Panc1 (cell line): ENCODE measurements at regions of chr14 and their contacts with region 1.

Region 1: DNA sequence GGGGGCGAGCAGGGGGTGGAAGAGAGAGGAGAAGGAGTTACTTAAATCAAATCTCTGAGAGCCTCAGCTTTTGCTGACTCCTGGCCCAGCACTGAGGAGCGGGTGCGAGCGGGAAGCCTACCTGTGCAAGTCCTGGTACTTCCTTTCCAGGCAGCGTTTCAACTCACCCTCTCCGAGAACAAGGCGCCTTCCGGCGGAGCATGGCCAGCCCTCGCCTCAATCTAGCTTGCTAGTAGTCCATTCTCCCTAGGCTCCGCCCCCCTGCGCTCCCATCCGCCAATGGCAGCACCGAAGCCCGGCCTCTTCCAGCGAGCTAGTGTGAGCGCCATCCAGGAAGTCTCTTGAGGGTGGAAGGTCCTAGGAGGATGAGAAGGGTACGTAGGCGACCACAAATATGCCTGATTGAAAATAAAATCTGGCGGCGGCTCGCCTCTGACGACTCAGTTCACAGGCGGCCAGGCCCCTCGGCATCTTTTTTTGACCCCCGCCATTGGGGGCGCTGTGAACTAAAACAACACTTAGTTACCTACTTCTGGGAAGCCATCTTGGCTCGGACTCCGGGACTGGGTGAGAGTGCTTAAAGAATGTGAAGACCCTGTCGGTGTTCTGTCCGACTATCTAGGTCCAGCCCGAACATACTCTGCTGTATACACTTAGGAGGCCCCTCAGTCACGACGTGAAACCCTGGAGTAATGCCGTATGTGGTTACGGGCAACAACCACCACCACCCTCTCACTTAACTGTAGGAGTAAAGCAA is at the start of gene CHD8:
- DNase-seq: peak; percentile 96
- ATAC-seq: peak; percentile 99
- H3K4me3 ChIP-seq: peak within 1 kb of the TSS; percentile 77 to 96
- H3K27ac ChIP-seq: peak within 1 kb of the TSS; percentile 98
- H3K4me1 ChIP-seq: peaks cover 4% of the 10 kb centered on the region; the same call in 1 of the 2 replicates
- H3K27me3 ChIP-seq: no peaks in the 10 kb centered on the region
- CTCF ChIP-seq: peak; percentile 78
- total RNA-seq, gene CHD8: 64.7 TPM

Region 2: DNA sequence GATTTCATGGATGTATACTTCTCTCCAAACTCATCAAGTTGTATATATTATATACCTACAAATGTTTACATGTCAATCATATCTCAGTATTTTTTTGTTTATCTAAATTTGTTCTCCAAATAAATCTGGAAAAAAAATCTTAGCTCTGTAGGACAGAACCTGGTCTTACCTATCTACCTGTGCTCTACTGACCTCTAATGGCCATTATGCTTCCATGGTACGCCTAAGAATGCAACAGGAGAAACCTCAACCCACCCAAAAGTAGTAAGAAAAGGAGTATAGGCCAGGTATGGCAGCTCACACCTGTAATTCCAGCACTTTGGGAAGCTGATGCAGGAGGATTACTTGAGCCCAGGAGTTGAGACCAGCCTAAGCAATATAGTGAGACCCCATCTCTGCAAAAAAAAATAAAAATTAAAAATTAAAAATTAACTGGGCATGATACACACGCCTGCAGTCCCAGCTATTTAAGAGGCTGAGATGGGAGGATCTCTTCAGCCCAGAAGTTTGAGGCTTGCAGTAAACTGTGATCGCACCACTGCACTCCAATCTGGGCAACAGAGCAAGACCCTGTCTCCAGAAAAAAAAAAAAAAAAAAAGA is 1208.3 kb before region 1 on chr14:
- CTCF ChIA-PET with region 1: no interaction called
- POLR2A ChIA-PET with region 1: no interaction called
- in situ Hi-C with region 1: no loop called
- intact Hi-C with region 1: no loop called
- DNase-seq: no peak
- ATAC-seq: peak; percentile 78
- H3K4me3 ChIP-seq: no peak overlapping the region
- H3K27ac ChIP-seq: no peak overlapping the region
- H3K4me1 ChIP-seq: no peaks in the 10 kb centered on the region
- H3K27me3 ChIP-seq: no peaks in the 10 kb centered on the region
- CTCF ChIP-seq: peak; percentile 62

Region 3: GRCh38 chr14:21123429-21123828 is 332.7 kb before region 1 on chr14:
- CTCF ChIA-PET with region 1: interaction called, 12 read pairs
- POLR2A ChIA-PET with region 1: no interaction called
- in situ Hi-C with region 1: no loop called
- intact Hi-C with region 1: no loop called
- DNase-seq: no peak
- ATAC-seq: no peak
- H3K4me3 ChIP-seq: no peak overlapping the region
- H3K27ac ChIP-seq: no peak overlapping the region
- H3K4me1 ChIP-seq: no peaks in the 10 kb centered on the region
- H3K27me3 ChIP-seq: 0 out of 2 replicates have a peak, but pooled peaks cover 2% of the 10 kb centered on the region
- CTCF ChIP-seq: no peak

Region 4: DNA sequence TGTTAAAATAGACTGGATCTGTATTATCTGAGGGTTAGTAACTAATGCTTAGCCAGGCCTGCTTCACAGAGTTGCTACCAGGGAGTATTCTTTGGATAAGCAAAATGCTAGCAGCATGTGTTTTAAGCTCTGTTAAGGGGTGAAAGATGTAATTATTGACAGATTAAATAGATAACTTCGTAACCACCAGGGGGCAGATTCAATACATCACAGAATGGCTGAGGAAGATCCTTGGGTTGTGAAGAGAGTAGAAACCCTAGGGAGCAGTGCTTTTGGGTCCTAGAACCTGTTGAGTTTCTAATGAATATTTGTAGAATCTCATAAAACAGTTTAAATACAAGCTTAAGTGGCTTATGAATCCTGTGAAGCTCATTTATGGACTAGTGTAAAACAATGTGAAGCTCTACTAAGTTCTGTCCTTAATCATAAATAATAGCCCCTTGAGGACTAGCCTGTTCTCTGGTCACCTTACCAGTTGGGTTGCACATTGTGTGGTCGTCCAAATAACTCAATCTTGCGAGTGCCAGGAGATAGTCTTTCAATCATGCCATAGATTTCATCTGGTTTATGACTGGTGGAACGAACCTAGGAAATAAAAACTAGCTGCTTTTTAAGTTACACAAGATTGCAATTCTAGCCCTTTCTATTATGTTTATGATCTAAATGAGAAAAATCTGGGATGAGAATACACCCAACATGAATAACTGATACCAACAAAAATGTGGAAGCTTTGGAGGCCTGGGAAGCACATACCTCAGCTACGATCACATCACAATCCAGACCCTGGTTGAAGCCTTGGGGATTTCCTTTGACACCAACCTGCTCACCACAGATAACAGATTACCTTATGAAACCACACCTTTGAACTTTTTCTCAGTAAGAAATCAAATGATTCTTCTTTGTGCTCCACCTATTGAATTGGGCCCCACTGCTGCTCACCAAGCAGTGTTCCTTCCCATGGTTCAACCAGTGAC is 42.8 kb after region 1 on chr14:
- CTCF ChIA-PET with region 1: no interaction called
- POLR2A ChIA-PET with region 1: no interaction called
- in situ Hi-C with region 1: no loop called
- intact Hi-C with region 1: no loop called
- DNase-seq: no peak
- ATAC-seq: peak; percentile 61; the same call in 1 of the 2 replicates
- H3K4me3 ChIP-seq: no peak overlapping the region
- H3K27ac ChIP-seq: no peak overlapping the region
- H3K4me1 ChIP-seq: no peaks in the 10 kb centered on the region
- H3K27me3 ChIP-seq: no peaks in the 10 kb centered on the region
- CTCF ChIP-seq: peak; percentile 25; the same call in 1 of the 2 replicates